BJ (cell line): ENCODE measurements at regions of chr2 and their contacts with region 1.

Region 1: DNA sequence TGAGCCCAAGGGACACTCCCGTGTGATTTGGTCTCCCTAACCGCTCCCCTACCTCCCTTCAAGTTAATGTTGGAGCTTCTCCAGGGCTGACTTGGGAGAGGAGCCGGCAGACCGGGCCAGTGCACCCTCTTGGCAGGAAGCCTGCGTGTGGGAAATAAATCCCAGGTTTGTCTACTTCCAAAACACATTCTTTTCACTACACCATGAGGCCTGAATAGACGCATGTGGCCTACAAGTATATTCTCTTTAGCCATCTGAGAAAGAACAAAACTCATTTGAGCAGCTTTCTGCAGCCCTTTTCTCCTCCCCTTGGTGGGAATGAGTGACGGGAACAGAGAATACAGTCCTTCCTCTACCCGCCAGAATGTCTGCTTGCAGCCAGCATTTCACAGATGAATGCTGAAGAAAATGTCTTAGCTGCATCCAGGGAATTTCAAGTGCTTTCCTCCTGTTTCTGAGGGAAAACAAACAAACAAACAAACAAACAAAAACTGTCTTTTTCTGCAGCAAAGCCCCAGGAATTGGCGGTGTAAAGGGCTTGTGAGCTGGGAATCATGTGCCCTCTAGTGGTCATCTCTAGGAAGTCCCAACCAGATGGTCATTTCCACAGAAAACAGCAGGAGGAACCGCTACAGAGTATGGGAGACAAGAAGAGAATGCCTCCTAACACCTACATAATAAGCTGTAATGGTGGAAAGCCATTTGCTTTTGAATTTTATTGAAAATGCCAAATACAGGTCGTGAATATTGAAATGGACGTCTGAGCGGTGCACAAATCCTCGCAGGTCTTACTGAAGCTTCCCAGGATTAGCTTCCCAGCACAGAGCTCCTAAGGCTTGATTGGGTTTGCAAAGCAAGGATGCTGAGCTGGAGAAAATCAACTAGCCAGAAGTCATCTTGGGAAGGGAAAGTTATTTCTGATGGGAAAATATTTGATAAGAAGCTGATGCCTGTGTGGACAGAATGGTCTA is 41.2 kb upstream of the DAPL1 start:
- DNase-seq: no peak
- H3K4me3 ChIP-seq: no peak overlapping the region
- H3K27me3 ChIP-seq: peaks cover 3% of the 10 kb centered on the region; the same call in 1 of the 2 replicates
- CTCF ChIP-seq: peak; percentile 83

Region 2: DNA sequence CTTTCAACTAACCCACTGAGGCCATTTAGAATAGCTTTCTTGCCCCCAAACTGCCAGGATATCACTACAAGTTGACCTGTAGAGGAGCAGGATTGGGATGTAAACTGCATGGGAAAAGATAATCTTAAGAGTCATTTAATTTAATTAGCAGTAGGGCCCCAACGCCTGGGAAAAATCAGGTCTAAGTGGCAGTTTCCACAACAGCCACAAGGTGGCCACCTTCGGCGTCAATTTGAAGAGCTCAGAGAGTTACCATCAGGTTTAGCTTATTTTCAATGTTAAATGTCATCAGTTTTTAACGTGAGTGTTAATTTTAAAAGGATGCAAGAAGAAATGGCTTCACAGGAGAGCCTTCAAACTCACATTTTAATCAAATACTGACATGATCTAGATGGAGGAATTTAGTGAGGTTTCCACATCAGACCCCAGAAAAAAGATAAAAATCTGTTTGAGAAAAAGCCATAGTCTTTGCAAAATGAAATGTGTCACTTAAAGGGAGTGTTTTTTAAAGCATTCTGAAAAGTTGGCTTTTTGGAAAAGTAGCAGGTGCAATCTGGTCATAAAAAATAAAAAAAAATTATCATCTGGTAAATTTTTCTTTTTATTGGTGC is 729.5 kb before region 1 on chr2:
- CTCF ChIA-PET with region 1: interaction called, 96 read pairs
- POLR2A ChIA-PET with region 1: interaction called, 3 read pairs
- DNase-seq: no peak
- H3K4me3 ChIP-seq: no peak overlapping the region
- H3K27me3 ChIP-seq: peaks cover 2% of the 10 kb centered on the region
- CTCF ChIP-seq: peak; percentile 80

Region 3: GRCh38 chr2:158034199-158034866 is 719.6 kb before region 1 on chr2:
- CTCF ChIA-PET with region 1: interaction called, 131 read pairs
- POLR2A ChIA-PET with region 1: no interaction called
- DNase-seq: no peak
- H3K4me3 ChIP-seq: no peak overlapping the region
- H3K27me3 ChIP-seq: no peaks in the 10 kb centered on the region; the same call in 1 of the 2 replicates
- CTCF ChIP-seq: peak; percentile 68

Region 4: GRCh38 chr2:158041400-158041799 is 712.5 kb before region 1 on chr2:
- CTCF ChIA-PET with region 1: interaction called, 131 read pairs
- POLR2A ChIA-PET with region 1: no interaction called
- DNase-seq: no peak
- H3K4me3 ChIP-seq: no peak overlapping the region
- H3K27me3 ChIP-seq: peaks cover 1% of the 10 kb centered on the region; the same call in 1 of the 2 replicates
- CTCF ChIP-seq: no peak

Region 5: DNA sequence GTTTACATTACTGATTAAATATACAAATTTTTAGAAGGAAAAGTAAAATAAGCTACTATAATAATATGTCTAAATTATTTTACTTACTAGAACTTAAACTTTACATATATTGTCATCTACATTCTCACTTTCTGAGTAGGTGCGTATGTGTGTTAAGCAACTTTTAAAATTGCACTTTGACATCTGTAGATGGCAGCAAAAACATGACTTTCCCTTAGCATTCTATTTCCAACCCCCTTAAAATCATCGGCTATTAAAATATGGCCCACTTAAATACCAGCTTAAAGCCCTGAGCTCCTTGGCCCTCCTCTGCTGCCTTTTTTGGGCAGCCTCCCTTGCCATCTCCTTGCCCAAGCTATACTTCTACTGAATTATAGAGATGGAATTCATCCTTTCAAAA is 574.3 kb before region 1 on chr2:
- CTCF ChIA-PET with region 1: interaction called, 29 read pairs
- POLR2A ChIA-PET with region 1: no interaction called
- DNase-seq: no peak
- H3K4me3 ChIP-seq: no peak overlapping the region
- H3K27me3 ChIP-seq: peaks cover 5% of the 10 kb centered on the region
- CTCF ChIP-seq: peak; percentile 37

Region 6: GRCh38 chr2:158773121-158773520 is 19.2 kb after region 1 on chr2:
- CTCF ChIA-PET with region 1: interaction called, 30 read pairs
- POLR2A ChIA-PET with region 1: no interaction called
- DNase-seq: no peak
- H3K4me3 ChIP-seq: no peak overlapping the region
- H3K27me3 ChIP-seq: 0 out of 2 replicates have a peak, but pooled peaks cover 1% of the 10 kb centered on the region
- CTCF ChIP-seq: no peak